ENCODE measurements at regions of chr22 and their contacts with region 1.

Region 1: DNA sequence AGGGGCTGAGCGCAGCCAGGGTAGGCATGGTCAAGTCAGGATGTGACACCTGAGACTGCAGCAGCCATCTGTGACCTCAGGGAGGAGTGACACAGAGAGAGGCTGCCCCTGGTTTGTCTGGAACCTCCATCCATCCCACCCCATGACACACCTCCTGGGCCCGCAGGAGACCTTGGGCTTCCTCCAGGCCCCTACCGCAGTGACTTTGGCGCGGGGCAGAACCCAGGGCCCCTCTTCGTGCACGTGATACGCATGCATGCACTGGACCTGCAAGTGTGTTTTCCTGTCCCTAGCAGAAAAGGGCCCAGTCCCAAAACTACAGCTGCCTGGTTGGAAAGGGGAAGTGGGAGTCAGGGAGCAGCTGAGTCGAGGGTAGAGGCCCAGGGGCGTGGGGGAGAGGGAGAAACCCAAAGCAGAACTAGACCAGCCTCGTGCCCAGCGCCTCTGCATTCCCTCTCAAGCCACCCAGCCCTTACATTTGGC is 7.9 kb upstream of the CYTH4 start:
- DNase-seq: peak; percentile 55 to 69
- ATAC-seq: peak in 1 of 4 donors; percentile 37
- H3K4me3 ChIP-seq: no peak overlapping the region
- H3K27ac ChIP-seq: no peak overlapping the region
- H3K4me1 ChIP-seq: no peaks in the 10 kb centered on the region
- H3K27me3 ChIP-seq: peaks cover 0 to 22% (median 12%) of the 10 kb centered on the region in 3 donors
- CTCF ChIP-seq: no peak

Region 2: DNA sequence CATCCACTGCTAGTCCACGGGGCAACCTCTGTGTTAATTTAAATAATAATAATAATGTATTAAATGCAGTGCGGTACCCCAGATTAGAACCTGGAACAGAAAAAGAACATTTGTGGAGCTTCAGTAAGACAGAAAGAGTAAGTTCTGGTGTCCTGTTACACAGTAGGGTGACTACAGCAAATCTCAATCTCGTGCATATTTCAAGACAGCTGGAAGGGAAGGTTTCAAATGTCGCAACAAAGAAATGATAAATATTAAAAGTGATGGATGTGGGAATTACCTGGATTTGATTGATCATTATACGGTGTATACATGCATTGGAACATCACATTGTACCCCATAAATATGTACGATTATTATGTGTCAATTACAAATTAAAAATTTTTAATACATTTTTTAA is 28.7 kb before region 1 on chr22:
- intact Hi-C with region 1: loop called in 1 of 2 experiments (anchors 2 kb)
- DNase-seq: no peak
- ATAC-seq: no peak
- H3K4me3 ChIP-seq: no peak overlapping the region
- H3K27ac ChIP-seq: no peak overlapping the region
- H3K4me1 ChIP-seq: no peaks in the 10 kb centered on the region
- H3K27me3 ChIP-seq: peaks cover 0 to 51% (median 15%) of the 10 kb centered on the region in 3 donors
- CTCF ChIP-seq: no peak

Region 3: GRCh38 chr22:37303821-37304274 is 29.4 kb after region 1 on chr22:
- intact Hi-C with region 1: no loop called
- DNase-seq: peak in 1 of 2 donors; percentile 39
- ATAC-seq: peak in 2 of 4 donors; percentile 15 to 21
- H3K4me3 ChIP-seq: no peak overlapping the region
- H3K27ac ChIP-seq: no peak overlapping the region
- H3K4me1 ChIP-seq: peaks cover 4% of the 10 kb centered on the region
- H3K27me3 ChIP-seq: peaks cover 0 to 5% (median 5%) of the 10 kb centered on the region in 3 donors
- CTCF ChIP-seq: no peak

Region 4: GRCh38 chr22:37345863-37346504 is 71.6 kb after region 1 on chr22:
- intact Hi-C with region 1: no loop called
- DNase-seq: no peak
- ATAC-seq: no peak
- H3K4me3 ChIP-seq: no peak overlapping the region
- H3K27ac ChIP-seq: no peak overlapping the region
- H3K4me1 ChIP-seq: no peaks in the 10 kb centered on the region
- H3K27me3 ChIP-seq: peaks cover 0 to 17% (median 0%) of the 10 kb centered on the region in 3 donors
- CTCF ChIP-seq: no peak

Measured in psoas muscle (tissue), 8 donors.